ENCODE measurements at regions of chr10 and their contacts with region 1.

Region 1: DNA sequence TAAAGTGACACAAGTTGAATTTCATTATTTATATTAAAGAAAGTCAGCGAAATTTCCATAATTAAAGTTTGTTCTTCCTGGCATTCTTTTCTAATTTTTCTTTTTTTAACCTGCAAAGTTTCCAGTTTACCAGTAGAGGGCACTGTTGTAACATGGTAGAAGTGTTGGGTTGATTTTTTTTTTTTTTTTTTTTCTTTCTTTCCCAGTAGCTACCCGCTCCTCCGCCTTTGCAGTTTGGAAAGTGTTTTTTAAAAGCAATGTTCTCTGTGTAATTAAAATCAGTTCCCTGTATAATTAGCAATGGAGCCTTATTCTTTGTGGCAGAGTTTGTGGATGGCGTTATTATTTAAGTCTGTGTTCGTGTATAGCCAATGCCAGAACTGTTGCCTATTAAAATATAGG is 53.7 kb downstream of the TAF3 start:
- DNase-seq: no peak
- H3K4me3 ChIP-seq: peak overlapping the region in 3 of 4 donors; percentile 25 to 47 (median 27)
- H3K27ac ChIP-seq: no peak overlapping the region
- H3K4me1 ChIP-seq: peaks cover 0 to 4% (median 0%) of the 10 kb centered on the region in 3 donors
- H3K27me3 ChIP-seq: no peaks in the 10 kb centered on the region
- CTCF ChIP-seq: peak; percentile 27 to 77 (median 67)
- POLR2A ChIP-seq: no peak

Region 2: GRCh38 chr10:7696545-7696944 is 175.5 kb before region 1 on chr10:
- intact Hi-C with region 1: no loop called
- DNase-seq: no peak
- H3K4me3 ChIP-seq: no peak overlapping the region
- H3K27ac ChIP-seq: no peak overlapping the region
- H3K4me1 ChIP-seq: no peaks in the 10 kb centered on the region
- H3K27me3 ChIP-seq: peaks cover 0 to 58% (median 0%) of the 10 kb centered on the region in 4 donors
- CTCF ChIP-seq: no peak
- POLR2A ChIP-seq: no peak

Region 3: DNA sequence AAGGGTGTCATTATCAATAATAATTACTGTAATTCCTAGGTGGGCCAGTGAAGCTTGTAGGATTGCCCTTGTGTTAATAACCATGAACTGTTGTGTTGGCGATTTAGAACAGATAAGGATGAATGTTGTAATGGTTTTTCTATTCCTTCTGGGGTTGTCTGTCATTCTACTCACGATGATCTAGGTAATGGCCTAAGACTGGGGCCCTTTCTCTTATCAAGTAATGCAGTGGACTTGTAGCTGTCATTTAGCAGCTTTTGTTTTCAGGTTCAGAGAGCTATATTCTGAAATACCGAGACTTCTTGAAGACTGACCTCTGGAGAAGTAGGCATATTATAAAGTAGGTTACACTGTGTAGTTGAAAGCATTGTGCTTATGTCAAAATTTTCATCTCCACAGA is 56.5 kb after region 1 on chr10:
- intact Hi-C with region 1: no loop called
- DNase-seq: no peak
- H3K4me3 ChIP-seq: no peak overlapping the region
- H3K27ac ChIP-seq: no peak overlapping the region
- H3K4me1 ChIP-seq: no peaks in the 10 kb centered on the region
- H3K27me3 ChIP-seq: no peaks in the 10 kb centered on the region
- CTCF ChIP-seq: no peak
- POLR2A ChIP-seq: no peak

Region 4: GRCh38 chr10:8075301-8076261 is 203.5 kb after region 1 on chr10:
- intact Hi-C with region 1: no loop called
- DNase-seq: no peak
- H3K4me3 ChIP-seq: no peak overlapping the region
- H3K27ac ChIP-seq: no peak overlapping the region
- H3K4me1 ChIP-seq: no peaks in the 10 kb centered on the region
- H3K27me3 ChIP-seq: peaks cover 0 to 54% (median 0%) of the 10 kb centered on the region in 4 donors
- CTCF ChIP-seq: no peak
- POLR2A ChIP-seq: no peak

Region 5: DNA sequence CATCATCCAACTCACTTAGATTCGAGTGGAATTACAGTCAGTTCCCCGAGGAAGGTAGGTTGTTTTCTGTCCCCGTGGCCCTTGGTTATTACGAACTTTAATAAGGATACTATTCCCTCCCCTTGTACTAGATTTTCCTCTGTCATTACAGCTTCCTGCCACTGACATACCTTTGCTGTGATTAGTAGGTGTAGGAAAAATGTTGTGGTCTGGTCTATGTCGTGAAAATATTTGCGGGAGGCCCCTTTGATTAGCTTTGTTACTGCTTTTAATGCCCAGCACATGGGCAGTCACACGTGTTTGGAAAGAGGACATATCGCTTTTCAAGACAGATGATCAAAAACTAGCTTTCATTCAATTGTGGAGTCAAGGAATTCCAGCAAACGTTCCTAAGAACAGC is 274.6 kb after region 1 on chr10:
- intact Hi-C with region 1: no loop called
- DNase-seq: no peak
- H3K4me3 ChIP-seq: no peak overlapping the region
- H3K27ac ChIP-seq: no peak overlapping the region
- H3K4me1 ChIP-seq: no peaks in the 10 kb centered on the region
- H3K27me3 ChIP-seq: peaks cover 0 to 37% (median 0%) of the 10 kb centered on the region in 4 donors
- CTCF ChIP-seq: no peak
- POLR2A ChIP-seq: no peak

Region 6: DNA sequence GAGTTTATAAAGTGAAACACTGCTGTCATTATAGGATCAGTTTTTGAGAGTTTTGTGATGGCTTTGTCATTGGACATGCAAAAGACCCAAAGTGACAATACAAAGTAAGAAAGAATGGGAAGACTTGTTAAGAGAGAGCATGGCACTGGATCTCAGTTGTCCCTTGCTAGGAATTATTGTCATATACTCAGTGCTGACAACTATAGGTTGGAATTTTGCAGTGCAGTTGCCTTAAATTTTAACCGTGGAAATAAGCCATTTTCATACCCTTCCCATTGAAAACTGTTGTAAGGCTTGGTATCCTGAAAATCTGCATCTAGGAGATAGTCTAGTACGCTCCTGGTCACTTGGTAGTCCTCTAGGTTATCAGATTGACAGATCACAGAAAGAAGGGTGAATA is 1339.2 kb after region 1 on chr10:
- intact Hi-C with region 1: loop called (anchors 10 kb)
- DNase-seq: no peak
- H3K4me3 ChIP-seq: no peak overlapping the region
- H3K27ac ChIP-seq: no peak overlapping the region
- H3K4me1 ChIP-seq: no peaks in the 10 kb centered on the region
- H3K27me3 ChIP-seq: peaks cover 0 to 24% (median 0%) of the 10 kb centered on the region in 4 donors
- CTCF ChIP-seq: no peak
- POLR2A ChIP-seq: no peak

Region 7: DNA sequence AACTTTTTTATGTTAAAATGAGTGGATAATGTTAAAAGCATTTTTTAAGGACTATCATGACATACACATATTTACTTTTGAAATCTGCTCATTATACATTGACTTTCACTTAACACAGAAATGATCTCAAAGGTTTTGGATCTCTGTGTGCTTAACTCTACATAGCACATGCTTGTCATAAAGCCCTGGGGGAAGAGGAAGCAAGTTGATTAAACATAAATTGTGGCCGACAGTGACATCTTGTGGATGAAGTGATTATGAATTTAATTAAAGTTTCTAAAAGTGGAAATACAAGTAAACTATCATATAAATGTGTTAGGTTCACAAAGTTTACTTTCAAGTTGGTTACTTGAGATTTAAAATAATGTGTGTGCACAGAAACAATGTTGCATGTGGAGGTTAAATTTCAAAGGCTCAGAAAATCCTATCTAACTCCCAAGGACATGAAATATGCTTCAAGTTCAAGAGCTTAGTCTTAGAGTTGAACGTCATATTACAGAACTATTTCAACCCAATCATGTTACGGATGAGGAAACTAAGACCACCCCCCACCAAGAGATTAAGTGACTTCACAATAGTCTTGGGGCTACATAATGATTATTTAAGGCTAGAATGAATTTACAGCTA is 1430.2 kb after region 1 on chr10:
- intact Hi-C with region 1: loop called (anchors 10 kb)
- DNase-seq: no peak
- H3K4me3 ChIP-seq: no peak overlapping the region
- H3K27ac ChIP-seq: no peak overlapping the region
- H3K4me1 ChIP-seq: no peaks in the 10 kb centered on the region
- H3K27me3 ChIP-seq: peaks cover 0 to 11% (median 0%) of the 10 kb centered on the region in 4 donors
- CTCF ChIP-seq: peak; percentile 21 to 59 (median 42)
- POLR2A ChIP-seq: no peak